ENCODE measurements at regions of chr17 and their contacts with region 1.

Region 1: DNA sequence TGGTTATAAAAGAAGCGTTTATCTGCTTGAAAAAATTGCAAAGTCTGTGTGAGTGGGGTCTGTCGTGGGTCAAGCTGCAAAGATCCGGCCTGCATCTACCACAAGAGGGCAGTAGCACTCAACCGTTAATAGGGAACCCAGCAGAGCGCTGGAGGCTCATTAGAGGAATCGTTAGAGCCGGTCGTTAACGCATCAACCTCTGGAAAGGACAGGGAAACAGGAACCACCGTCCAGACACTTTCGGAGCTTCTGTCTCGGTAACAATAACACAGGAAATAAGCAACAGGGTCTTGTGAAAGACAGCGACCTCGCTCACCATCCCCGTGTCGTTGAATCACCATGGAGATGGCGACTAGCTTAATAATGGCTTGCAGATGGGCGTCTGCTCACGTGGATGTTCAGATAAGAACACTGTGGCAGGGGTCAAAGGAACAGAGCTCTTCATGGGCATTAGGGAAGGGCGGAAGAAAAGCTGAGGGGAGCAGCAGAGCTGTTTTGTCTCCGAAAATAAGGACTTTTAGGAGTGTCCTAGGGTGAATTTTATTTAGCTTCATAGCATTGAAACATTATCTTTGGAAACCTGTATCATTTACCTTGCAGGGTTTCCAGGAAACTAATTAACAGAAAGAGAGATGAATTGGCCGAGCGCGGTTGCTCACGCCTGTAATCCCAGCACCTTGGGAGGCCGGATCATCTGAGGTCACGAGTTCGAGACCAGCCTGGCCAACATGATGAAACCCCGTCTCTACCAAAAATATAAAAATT is 11.9 kb upstream of the NSRP1 start:
- DNase-seq: peak; percentile 75 to 94 (median 81)
- H3K4me3 ChIP-seq: peak overlapping the region in 1 of 4 donors; percentile 49
- H3K27ac ChIP-seq: peak overlapping the region in 3 of 5 donors; percentile 6 to 54 (median 52)
- H3K4me1 ChIP-seq: peaks cover 0 to 3% of the 10 kb centered on the region in 2 donors
- H3K27me3 ChIP-seq: no peaks in the 10 kb centered on the region
- CTCF ChIP-seq: peak; percentile 71 to 91 (median 79)
- POLR2A ChIP-seq: no peak

Region 2: GRCh38 chr17:30336369-30337171 is 231.8 kb after region 1 on chr17:
- intact Hi-C with region 1: loop called in 1 of 2 experiments (anchors 10 kb)
- DNase-seq: peak in 6 of 7 donors; percentile 21 to 61 (median 34)
- H3K4me3 ChIP-seq: no peak overlapping the region
- H3K27ac ChIP-seq: no peak overlapping the region
- H3K4me1 ChIP-seq: peaks cover 0 to 7% of the 10 kb centered on the region in 2 donors
- H3K27me3 ChIP-seq: no peaks in the 10 kb centered on the region
- CTCF ChIP-seq: peak; percentile 29 to 60 (median 54)
- POLR2A ChIP-seq: no peak

Measured in adrenal gland (tissue), 19 donors.